PC-3 (cell line): ENCODE measurements at regions of chr16 and their contacts with region 1.

Region 1: DNA sequence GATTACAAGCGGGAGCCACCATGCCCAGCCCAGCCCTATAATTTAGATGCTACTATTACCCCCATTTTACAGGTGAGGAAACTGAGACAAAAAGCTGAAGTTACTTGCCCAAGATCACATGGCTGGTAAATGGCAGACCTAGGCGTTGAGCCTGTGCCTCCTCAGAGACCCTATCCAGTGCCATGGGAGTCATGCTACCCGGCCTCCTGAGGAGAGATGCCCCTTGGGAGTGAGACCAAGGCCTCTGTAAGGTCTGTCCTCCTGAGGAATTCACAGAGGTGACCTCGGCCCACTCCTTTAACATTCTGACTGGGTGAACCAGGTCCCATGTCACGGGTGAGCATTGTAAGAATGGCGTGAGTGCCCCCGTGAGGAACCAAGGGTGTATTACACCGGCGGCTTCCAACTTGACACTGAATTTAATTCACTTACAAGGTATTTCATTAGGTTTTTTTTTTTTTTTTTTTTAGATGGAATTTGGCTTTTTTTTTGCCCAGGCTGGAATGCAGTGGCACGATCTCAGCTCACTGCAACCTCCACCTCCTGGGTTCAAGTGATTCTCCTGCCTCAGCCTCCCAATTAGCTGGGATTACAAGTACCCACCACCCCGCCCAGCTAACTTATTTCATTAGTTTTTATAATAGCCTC is 95.7 kb downstream of the ABCC6 start:
- DNase-seq: peak; percentile 74
- ATAC-seq: peak; percentile 76
- H3K4me3 ChIP-seq: no peak overlapping the region
- H3K27ac ChIP-seq: no peak overlapping the region
- H3K4me1 ChIP-seq: no peaks in the 10 kb centered on the region
- H3K27me3 ChIP-seq: no peaks in the 10 kb centered on the region
- CTCF ChIP-seq: peak; percentile 73

Region 2: DNA sequence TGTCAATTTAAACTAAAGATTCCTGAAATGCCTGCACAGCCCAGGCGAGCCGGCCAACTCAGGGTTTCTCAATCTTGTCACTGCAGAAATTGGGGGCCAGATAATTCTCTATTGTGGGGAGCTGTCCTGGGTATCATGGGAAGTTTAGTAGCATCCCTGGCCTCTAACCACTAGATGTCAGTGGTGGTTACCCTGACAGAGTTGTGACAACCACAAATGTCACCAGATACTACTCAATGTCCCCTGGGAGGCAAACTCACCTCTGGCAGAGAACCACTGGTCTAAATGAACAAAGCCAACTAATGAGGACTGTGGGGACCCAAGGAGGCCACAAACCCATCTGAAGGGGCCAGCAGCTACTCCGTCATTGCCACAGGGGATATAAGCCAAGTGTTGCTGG is 361.7 kb before region 1 on chr16:
- CTCF ChIA-PET with region 1: no interaction called
- POLR2A ChIA-PET with region 1: no interaction called
- intact Hi-C with region 1: loop called (anchors 1 kb)
- DNase-seq: peak; percentile 62
- ATAC-seq: peak; percentile 78
- H3K4me3 ChIP-seq: no peak overlapping the region
- H3K27ac ChIP-seq: no peak overlapping the region
- H3K4me1 ChIP-seq: no peaks in the 10 kb centered on the region
- H3K27me3 ChIP-seq: no peaks in the 10 kb centered on the region
- CTCF ChIP-seq: peak; percentile 77